ENCODE measurements at regions of chr11 and their contacts with region 1.

Region 1: DNA sequence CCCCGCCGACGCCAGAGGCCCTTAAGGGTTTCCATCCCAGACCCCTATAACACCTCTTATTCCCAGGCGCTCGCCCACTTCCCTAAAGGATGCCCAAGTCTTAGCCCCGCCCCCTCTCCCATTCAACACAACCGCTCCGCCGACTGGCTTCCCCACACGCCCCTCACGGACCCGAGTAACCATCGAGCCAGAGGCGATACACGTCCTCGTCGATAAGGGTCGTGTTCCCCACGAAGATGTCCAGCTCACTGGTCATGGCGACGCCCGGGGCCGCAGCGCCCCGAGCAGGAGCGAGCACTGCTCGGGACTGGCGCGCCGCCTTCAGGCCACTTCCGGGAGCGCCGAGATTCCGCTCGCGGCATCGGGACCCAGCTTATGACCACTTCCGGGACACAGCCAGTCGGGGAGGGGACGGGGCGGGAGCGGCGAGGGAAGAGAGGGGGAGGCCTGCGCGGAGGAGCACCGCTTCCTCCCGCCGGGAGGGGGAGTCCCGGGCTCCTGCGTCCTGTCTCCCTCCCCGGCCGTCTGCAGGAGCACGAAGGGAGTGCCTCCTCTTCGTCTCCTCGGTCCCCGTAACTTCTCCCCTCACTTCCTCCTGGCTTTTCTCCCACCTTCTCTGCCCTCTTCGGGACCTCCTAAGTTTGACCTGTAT is at the start of gene FIBP:
- DNase-seq: peak; percentile 98
- H3K4me3 Mint-ChIP-seq: peak within 1 kb of the TSS; percentile 99
- H3K27ac Mint-ChIP-seq: peak within 1 kb of the TSS; percentile 89
- H3K4me1 Mint-ChIP-seq: peaks cover 57% of the 10 kb centered on the region
- H3K27me3 Mint-ChIP-seq: no peaks in the 10 kb centered on the region
- total RNA-seq, gene FIBP: 94.2 to 101 TPM

Region 2: DNA sequence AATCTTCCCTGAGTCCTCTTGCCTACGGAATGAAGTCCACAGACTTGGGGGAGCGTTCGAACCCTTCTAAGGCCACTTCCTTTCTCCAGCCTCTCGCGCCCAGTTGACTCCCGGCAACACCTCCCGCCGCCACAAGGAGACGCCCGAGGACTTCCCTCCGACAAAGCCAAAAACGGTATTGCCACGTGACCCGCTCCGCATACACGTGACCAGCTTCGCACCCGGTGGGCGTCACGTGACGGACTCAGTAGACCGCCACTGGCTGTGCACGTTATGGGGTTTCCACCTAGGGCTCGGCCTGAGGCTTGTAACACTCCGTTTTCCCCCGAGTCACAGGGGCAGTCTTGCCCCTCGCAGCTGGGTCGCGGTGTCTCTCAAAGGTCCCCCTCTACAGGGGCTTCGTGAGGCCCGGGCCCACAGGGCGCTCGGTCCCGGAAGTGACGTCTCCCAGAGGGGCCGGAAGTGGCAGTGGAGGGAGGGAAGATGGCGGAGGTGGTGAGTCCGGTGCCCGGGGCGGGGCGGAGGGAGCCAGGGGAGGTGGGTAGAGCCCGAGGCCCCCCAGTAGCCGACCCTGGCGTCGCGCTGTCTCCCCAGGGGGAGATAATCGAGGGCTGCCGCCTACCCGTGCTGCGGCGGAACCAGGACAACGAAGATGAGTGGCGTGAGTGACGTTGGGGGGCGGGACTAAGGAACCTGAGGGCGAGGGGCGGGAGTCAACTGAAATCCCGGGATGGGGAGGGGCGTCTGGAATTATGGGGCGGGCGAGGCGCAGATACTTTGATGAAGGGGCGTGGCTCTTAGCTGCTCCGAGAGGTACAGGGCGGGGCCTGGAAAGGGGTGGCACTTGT is 176.3 kb before region 1 on chr11 and contains the start of gene KAT5:
- CTCF ChIA-PET with region 1: interaction called, 37 read pairs
- POLR2A ChIA-PET with region 1: interaction called, 5 read pairs
- intact Hi-C with region 1: no loop called
- DNase-seq: peak; percentile 99
- H3K4me3 Mint-ChIP-seq: peak within 1 kb of the TSS; percentile 90
- H3K27ac Mint-ChIP-seq: peak within 1 kb of the TSS; percentile 97
- H3K4me1 Mint-ChIP-seq: peaks cover 27% of the 10 kb centered on the region
- H3K27me3 Mint-ChIP-seq: no peaks in the 10 kb centered on the region
- total RNA-seq, gene KAT5: 55.9 to 61.6 TPM

Region 3: GRCh38 chr11:65833297-65834030 is 54.8 kb before region 1 on chr11 and contains the start of gene SNX32:
- CTCF ChIA-PET with region 1: interaction called, 12 read pairs
- POLR2A ChIA-PET with region 1: interaction called, 3 read pairs
- intact Hi-C with region 1: no loop called
- DNase-seq: peak; percentile 98
- H3K4me3 Mint-ChIP-seq: no peak within 1 kb of the TSS
- H3K27ac Mint-ChIP-seq: no peak within 1 kb of the TSS
- H3K4me1 Mint-ChIP-seq: peaks cover 21% of the 10 kb centered on the region
- H3K27me3 Mint-ChIP-seq: no peaks in the 10 kb centered on the region
- total RNA-seq, gene SNX32: 2.0 to 2.7 TPM

Region 4: GRCh38 chr11:65873318-65874156 is 14.8 kb before region 1 on chr11:
- CTCF ChIA-PET with region 1: interaction called, 151 read pairs
- POLR2A ChIA-PET with region 1: interaction called, 29 read pairs
- intact Hi-C with region 1: loop called (anchors 2 kb)
- DNase-seq: peak; percentile 98
- H3K4me3 Mint-ChIP-seq: peak overlapping the region; percentile 85
- H3K27ac Mint-ChIP-seq: peak overlapping the region; percentile 81
- H3K4me1 Mint-ChIP-seq: peaks cover 20% of the 10 kb centered on the region
- H3K27me3 Mint-ChIP-seq: no peaks in the 10 kb centered on the region

Region 5: GRCh38 chr11:65919146-65920033 is 31.1 kb after region 1 on chr11 and contains the start of gene DRAP1:
- CTCF ChIA-PET with region 1: interaction called, 6 read pairs
- POLR2A ChIA-PET with region 1: interaction called, 17 read pairs
- intact Hi-C with region 1: loop called (anchors 1 kb)
- DNase-seq: peak; percentile 99
- H3K4me3 Mint-ChIP-seq: peak within 1 kb of the TSS; percentile 90
- H3K27ac Mint-ChIP-seq: peak within 1 kb of the TSS; percentile 84
- H3K4me1 Mint-ChIP-seq: peaks cover 33% of the 10 kb centered on the region
- H3K27me3 Mint-ChIP-seq: no peaks in the 10 kb centered on the region
- total RNA-seq, gene DRAP1: 154 to 169 TPM

Region 6: GRCh38 chr11:65961232-65961901 is 73.1 kb after region 1 on chr11 and contains the start of gene SART1:
- CTCF ChIA-PET with region 1: interaction called, 39 read pairs
- POLR2A ChIA-PET with region 1: interaction called, 21 read pairs
- intact Hi-C with region 1: loop called (anchors 2 kb)
- DNase-seq: peak; percentile 98
- H3K4me3 Mint-ChIP-seq: peak within 1 kb of the TSS; percentile 95
- H3K27ac Mint-ChIP-seq: peak within 1 kb of the TSS; percentile 94
- H3K4me1 Mint-ChIP-seq: peaks cover 43% of the 10 kb centered on the region
- H3K27me3 Mint-ChIP-seq: no peaks in the 10 kb centered on the region
- total RNA-seq, gene SART1: 59.1 to 60.5 TPM

Region 7: GRCh38 chr11:66001942-66002647 is 113.8 kb after region 1 on chr11 and contains the starts of genes BANF1 and EIF1AD:
- CTCF ChIA-PET with region 1: interaction called, 11 read pairs
- POLR2A ChIA-PET with region 1: interaction called, 4 read pairs
- intact Hi-C with region 1: no loop called
- DNase-seq: peak; percentile 97
- H3K4me3 Mint-ChIP-seq: peak within 1 kb of the TSS; percentile 99
- H3K27ac Mint-ChIP-seq: peak within 1 kb of the TSS; percentile 99
- H3K4me1 Mint-ChIP-seq: peaks cover 38% of the 10 kb centered on the region
- H3K27me3 Mint-ChIP-seq: no peaks in the 10 kb centered on the region
- total RNA-seq, gene BANF1: 264 to 280 TPM
- total RNA-seq, gene EIF1AD: 41.2 to 42.7 TPM